ENCODE measurements at regions of chr14 and their contacts with region 1.

Region 1: GRCh38 chr14:91060351-91061055 is at the start of gene RPS6KA5:
- DNase-seq: peak; percentile 100
- H3K4me3 ChIP-seq: peak within 1 kb of the TSS; percentile 80 to 100 (median 92)
- H3K27ac ChIP-seq: peak within 1 kb of the TSS; percentile 89 to 95
- H3K4me1 ChIP-seq: peaks cover 23 to 49% (median 37%) of the 10 kb centered on the region in 4 experiments
- H3K27me3 ChIP-seq: no peaks in the 10 kb centered on the region

Region 2: GRCh38 chr14:91048265-91048664 is 12.2 kb before region 1 on chr14:
- CTCF ChIA-PET with region 1: interaction called, 10 read pairs
- POLR2A ChIA-PET with region 1: no interaction called
- DNase-seq: peak in 2 of 3 donors; percentile 53 to 56
- H3K4me3 ChIP-seq: peak overlapping the region in 2 of 7 experiments; percentile 13 to 34
- H3K27ac ChIP-seq: no peak overlapping the region
- H3K4me1 ChIP-seq: peaks cover 6 to 15% (median 9%) of the 10 kb centered on the region in 4 experiments
- H3K27me3 ChIP-seq: no peaks in the 10 kb centered on the region

Region 3: GRCh38 chr14:91089958-91090535 is 29.5 kb after region 1 on chr14:
- CTCF ChIA-PET with region 1: no interaction called
- POLR2A ChIA-PET with region 1: no interaction called
- DNase-seq: peak in 1 of 3 donors; percentile 13
- H3K4me3 ChIP-seq: no peak overlapping the region
- H3K27ac ChIP-seq: no peak overlapping the region
- H3K4me1 ChIP-seq: no peaks in the 10 kb centered on the region
- H3K27me3 ChIP-seq: no peaks in the 10 kb centered on the region

Region 4: DNA sequence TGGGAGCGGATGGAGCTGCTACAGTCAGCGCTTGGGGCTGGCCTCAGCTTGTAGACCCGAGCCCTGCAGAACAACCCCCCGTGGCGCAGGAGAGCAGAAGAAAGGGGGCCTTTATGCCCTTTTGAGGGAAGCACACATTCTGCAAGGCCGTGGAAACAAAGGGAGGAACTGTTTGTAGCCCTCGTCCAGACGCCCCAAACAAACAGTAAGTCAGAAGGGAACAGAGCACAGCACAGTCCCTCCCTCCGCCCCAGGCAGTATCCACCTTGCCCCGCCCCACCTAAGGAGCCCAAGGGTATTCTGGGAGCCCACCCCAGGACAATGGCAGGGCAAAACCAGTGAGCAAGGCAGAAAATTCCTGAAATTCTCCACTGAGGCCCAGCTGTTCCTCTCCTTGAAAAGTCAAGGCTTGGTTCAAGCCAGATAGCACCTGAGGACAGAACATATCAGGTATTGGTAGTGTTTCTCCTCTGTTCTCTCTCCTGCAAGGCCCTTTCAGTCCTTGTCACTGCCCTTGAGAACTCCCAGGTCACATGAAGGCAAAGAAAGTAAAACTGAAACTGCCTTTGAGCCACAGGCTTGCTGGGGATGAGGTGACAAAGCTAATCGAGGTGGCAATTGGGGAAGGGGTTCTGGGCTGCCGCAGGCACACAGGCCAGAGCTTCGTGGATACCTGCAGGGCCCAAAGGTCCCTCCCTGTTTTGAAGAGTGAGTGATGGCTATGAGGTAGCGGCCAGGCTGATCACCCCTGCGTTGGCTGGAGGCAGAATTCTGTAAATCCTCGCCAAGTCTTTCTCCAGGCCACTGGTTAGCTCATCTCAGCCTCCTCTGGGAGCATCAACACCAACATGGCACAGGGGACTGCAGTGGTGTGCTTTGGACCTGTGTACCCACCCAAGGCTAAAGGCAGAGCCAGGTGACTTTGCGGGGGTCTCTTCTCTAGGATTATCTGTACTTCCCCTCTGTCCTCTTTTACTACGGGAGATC is 53.9 kb after region 1 on chr14:
- CTCF ChIA-PET with region 1: interaction called, 17 read pairs
- POLR2A ChIA-PET with region 1: interaction called, 4 read pairs
- DNase-seq: peak; percentile 85 to 96 (median 94)
- H3K4me3 ChIP-seq: peak overlapping the region; percentile 32 to 94 (median 83)
- H3K27ac ChIP-seq: peak overlapping the region; percentile 90 to 95
- H3K4me1 ChIP-seq: peaks cover 19 to 59% (median 52%) of the 10 kb centered on the region in 4 experiments
- H3K27me3 ChIP-seq: no peaks in the 10 kb centered on the region